ENCODE measurements at regions of chr17 and their contacts with region 1.

Region 1: DNA sequence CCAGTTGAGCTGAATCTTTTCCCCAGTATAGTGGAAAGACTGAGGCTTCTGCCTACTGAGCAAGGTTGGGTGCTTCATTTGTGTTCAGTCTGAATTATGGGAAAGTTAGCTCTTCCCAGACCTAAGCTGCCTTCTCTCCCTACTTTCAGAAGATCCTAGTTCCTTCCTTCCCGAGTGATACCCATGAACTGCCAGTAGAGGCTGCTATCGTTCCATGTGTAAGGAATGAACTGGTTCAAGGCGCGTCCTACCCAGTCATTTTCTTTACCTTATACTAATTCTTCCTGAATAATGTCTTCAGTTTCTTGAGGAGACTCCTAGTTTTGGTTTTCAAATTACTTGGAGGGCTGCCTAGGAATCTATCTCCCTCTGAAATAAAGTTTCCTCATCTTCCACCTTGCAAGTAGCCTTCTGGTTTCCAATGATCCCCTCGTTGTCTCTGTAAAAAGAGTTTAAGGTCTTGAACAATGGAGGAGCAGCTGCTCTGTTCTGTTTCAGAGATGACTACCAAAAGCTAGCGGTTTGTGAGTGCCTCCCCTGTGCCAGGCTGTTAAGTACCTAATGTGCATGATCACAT is 934 bp upstream of the AOC2 start:
- DNase-seq: peak; percentile 12
- H3K4me3 ChIP-seq: no peak overlapping the region
- H3K27ac ChIP-seq: peak overlapping the region in 1 of 8 donors; percentile 31
- H3K4me1 ChIP-seq: peaks cover 0 to 66% (median 19%) of the 10 kb centered on the region in 6 donors
- H3K27me3 ChIP-seq: no peaks in the 10 kb centered on the region
- CTCF ChIP-seq: peak; percentile 44 to 85 (median 72)
- POLR2A ChIP-seq: no peak

Region 2: DNA sequence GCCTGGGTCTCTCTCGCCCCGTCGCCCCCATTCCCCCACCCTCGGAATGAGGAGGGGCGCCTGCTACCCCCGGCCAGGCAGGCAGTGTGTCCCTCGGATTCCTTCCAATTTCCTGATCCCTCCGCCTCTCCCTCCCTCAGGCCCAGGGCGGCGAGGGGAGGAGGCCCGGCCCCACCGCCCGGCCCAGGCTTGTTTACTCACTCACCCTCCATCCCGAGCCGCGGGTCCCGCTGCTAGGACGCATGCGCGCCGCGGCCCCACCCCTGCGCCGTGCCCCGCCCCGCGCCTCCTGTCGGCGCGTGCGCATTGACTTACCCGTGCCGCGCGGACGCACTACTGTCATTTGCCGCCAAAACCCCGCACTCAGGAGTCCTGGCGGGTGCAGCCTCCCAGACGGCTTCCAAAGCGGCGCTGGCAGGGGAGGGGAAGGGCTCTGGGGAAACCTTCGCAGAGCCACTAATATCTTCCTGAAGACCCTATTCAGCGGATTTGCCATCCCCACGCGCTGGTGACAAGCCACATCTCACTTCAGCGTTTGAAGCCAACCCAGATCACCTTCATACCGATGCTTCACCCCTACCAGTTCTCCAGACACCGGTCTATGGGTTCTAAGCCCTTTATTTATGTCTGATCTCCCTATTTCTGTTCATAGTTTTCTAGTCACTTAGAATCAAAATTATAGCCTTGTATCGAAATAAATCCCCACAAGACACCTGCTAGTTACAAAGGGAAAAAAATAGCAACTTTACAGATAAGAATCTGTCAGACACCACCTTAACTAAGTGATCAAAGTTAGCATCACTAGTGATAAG is 98.4 kb before region 1 on chr17 and contains the start of gene EZH1:
- intact Hi-C with region 1: no loop called
- DNase-seq: peak; percentile 98
- H3K4me3 ChIP-seq: peak within 1 kb of the TSS; percentile 77 to 96 (median 84)
- H3K27ac ChIP-seq: peak within 1 kb of the TSS; percentile 86 to 97 (median 94)
- H3K4me1 ChIP-seq: peaks cover 18 to 61% (median 31%) of the 10 kb centered on the region in 6 donors
- H3K27me3 ChIP-seq: peaks cover 0 to 8% (median 0%) of the 10 kb centered on the region in 7 donors
- CTCF ChIP-seq: peak in 6 of 11 experiments; percentile 24 to 52 (median 38)
- POLR2A ChIP-seq: peak in 2 of 3 donors; percentile 45 to 81
- total RNA-seq, gene EZH1: 62.3 to 104 (median 75.5) TPM

Region 3: GRCh38 chr17:42798383-42799380 is 44.8 kb before region 1 on chr17 and contains the starts of genes CNTD1 and COA3:
- intact Hi-C with region 1: no loop called
- DNase-seq: peak; percentile 97
- H3K4me3 ChIP-seq: peak within 1 kb of the TSS; percentile 62 to 97 (median 84)
- H3K27ac ChIP-seq: peak within 1 kb of the TSS in 6 of 8 donors; percentile 61 to 84 (median 76)
- H3K4me1 ChIP-seq: peaks cover 13 to 43% (median 25%) of the 10 kb centered on the region in 6 donors
- H3K27me3 ChIP-seq: no peaks in the 10 kb centered on the region
- CTCF ChIP-seq: peak in 1 of 11 experiments; percentile 22
- POLR2A ChIP-seq: no peak
- total RNA-seq, gene CNTD1: not detected
- total RNA-seq, gene COA3: 30.0 to 62.0 (median 39.0) TPM

Region 4: DNA sequence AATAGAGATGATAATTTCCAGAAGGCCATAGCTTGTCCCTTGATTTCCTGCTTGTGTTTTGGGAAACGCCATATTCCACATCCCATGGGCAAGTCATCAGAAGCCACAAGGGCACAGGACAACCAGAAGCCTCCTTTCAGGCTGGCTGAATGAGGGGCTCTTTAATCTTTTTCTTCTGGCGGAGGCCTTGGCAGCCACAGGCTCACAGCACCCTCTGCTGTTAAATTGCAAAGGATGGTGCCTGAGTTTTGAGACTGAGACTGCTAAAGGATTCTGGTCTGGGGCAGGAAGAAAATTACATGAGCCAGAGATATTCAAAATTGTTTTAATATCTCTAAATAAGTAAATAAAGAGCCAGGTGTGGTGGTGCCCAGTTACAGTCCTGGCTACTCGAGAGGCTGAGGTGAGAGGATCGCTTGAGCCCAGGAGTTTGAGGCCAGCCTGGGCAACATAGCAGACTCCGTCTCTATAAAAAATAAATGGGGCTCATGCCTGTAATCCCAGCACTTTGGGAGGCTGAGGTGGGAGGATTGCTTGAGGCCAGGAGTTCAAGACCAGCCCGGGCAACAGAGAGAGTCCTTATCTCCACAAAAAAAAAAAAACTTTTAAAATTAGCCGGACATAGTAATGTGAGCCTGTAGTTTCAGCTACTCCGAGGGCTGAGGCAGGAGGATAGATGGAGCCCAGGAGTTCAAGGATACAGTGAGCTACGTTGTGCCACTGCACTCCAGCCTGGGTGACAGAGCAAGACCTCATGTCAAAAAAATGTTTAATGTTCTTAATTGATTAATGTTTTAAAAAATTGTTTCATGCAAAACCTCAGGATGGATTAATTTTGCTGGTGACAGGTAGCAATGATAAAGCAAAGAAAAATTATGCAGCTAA is 94.5 kb after region 1 on chr17:
- intact Hi-C with region 1: loop called (anchors 2 kb)
- DNase-seq: no peak
- H3K4me3 ChIP-seq: no peak overlapping the region
- H3K27ac ChIP-seq: no peak overlapping the region
- H3K4me1 ChIP-seq: peaks cover 0 to 7% (median 0%) of the 10 kb centered on the region in 6 donors
- H3K27me3 ChIP-seq: peaks cover 0 to 9% (median 0%) of the 10 kb centered on the region in 7 donors
- CTCF ChIP-seq: peak in 8 of 11 experiments; percentile 35 to 60 (median 53)
- POLR2A ChIP-seq: no peak

Measured in spleen (tissue), 13 donors.